ENCODE measurements at regions of chr3 and their contacts with region 1.

Region 1: DNA sequence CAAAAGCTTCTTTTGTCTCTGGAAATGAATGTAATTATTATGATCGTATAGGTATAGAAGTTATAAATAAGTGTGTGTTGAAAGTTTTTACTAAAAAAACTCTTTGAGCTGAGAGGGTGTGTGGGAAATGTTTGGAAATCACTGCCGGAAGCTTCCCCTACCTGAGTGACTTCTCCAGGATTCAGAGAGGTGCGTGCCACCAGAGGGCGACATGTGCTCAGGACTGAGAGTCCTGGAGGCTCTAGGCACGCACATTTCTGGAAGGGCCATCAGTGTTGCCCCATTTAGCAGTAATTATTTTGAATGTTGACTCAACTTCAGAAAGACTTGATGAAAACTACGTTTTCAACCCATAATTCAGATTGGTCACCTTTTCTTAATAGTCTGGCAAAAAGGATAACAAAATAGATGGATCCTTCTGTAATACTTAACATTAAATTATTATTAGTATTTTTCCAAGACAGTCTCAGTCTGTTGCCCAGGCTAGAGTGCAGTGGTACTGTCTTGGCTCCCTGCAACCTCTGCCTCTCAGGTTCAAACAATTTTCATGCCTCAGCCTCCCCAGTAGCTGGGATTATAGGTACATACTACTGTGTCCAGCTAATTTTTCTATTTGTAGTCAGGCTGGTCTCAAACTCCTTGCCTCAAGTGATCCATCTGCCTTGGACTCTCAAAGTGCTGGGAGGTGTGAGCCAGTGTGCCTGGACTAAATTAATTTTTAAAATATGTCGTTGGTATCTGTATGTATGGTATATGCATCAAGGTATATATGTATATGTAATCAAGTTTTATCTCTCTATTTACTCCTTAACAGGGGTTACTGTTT is 34.5 kb downstream of the GPR171 start:
- DNase-seq: peak; percentile 92
- ATAC-seq: peak; percentile 65
- H3K4me3 Mint-ChIP-seq: no peak overlapping the region
- H3K27ac Mint-ChIP-seq: peak overlapping the region; percentile 27
- H3K4me1 Mint-ChIP-seq: peaks cover 43% of the 10 kb centered on the region
- H3K27me3 Mint-ChIP-seq: no peaks in the 10 kb centered on the region
- CTCF ChIP-seq: peak; percentile 85

Region 2: DNA sequence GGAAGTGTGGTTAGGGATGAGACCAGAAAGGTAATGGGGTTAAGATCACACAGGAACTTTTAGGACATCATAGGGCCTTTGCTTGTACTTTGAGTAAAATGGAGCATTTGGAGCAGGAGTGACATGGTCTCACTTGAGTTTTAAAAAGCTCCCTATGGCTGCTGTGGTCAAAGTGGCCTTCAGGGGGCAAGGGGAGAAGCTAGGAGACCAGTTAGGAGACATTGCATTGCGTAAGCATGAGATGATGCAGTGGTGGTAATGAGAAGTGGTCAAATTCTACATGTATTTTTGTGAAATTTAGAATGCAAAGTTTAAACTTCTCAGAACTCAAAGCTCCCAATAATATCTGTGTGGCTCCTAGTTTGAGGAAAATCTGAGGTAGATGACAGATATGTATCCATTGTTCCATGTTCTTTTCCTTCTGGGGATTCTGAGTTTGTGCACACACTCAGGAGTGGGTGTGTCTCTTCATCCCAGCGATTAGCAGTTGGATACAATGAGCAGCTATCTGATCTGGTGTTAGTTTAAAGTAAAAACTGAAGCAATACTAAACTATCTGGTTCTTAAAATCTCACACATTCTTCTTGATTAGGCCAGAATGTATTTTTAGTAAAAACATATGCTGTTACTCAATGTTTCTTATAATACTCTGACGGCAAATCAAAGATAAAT is 55.0 kb before region 1 on chr3:
- CTCF ChIA-PET with region 1: no interaction called
- POLR2A ChIA-PET with region 1: no interaction called
- intact Hi-C with region 1: no loop called
- DNase-seq: no peak
- ATAC-seq: no peak
- H3K4me3 Mint-ChIP-seq: no peak overlapping the region
- H3K27ac Mint-ChIP-seq: no peak overlapping the region
- H3K4me1 Mint-ChIP-seq: no peaks in the 10 kb centered on the region
- H3K27me3 Mint-ChIP-seq: peaks cover 3% of the 10 kb centered on the region
- CTCF ChIP-seq: no peak

Region 3: GRCh38 chr3:151183265-151183671 is 14.8 kb after region 1 on chr3:
- CTCF ChIA-PET with region 1: interaction called, 13 read pairs
- POLR2A ChIA-PET with region 1: interaction called, 4 read pairs
- intact Hi-C with region 1: no loop called
- DNase-seq: no peak
- ATAC-seq: peak; percentile 63
- H3K4me3 Mint-ChIP-seq: peak overlapping the region; percentile 67
- H3K27ac Mint-ChIP-seq: peak overlapping the region; percentile 84
- H3K4me1 Mint-ChIP-seq: peaks cover 55% of the 10 kb centered on the region
- H3K27me3 Mint-ChIP-seq: no peaks in the 10 kb centered on the region
- CTCF ChIP-seq: no peak

Region 4: DNA sequence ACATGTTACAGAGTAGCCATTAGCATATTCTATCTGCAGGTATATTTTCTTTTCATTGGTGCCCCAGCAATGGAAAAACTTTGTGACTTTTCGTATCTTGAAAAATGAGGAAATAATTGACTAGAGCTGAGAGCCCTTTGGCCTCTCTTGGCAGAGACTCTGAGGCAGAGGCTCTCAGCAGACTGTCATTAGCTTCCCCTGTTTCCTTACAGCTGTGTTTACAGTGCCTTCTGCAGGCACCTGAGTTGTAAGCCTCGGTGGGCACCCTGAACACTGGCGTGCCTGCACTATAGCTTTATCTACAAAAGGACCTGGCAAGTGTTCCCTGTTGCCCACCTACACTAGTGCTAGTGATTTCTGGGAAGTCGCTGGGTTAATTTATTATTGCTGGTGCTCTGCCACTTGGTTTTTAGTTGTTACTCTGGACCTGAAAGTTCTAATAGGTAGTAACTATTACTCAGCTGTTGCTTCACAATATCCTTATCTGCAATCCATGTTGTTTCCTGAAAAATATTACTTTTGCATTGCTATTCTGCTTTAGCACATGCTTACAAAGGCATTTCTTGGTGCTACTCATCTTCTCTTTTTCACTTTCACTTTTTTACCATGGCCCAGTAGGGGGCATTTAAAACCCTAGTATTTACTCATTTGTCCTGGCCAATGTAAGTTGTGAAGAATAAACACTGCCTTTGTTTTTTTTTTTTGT is 42.3 kb after region 1 on chr3:
- CTCF ChIA-PET with region 1: interaction called, 33 read pairs
- POLR2A ChIA-PET with region 1: interaction called, 7 read pairs
- intact Hi-C with region 1: no loop called
- DNase-seq: no peak
- ATAC-seq: peak; percentile 50
- H3K4me3 Mint-ChIP-seq: peak overlapping the region; percentile 63
- H3K27ac Mint-ChIP-seq: peak overlapping the region; percentile 85
- H3K4me1 Mint-ChIP-seq: peaks cover 51% of the 10 kb centered on the region
- H3K27me3 Mint-ChIP-seq: no peaks in the 10 kb centered on the region
- CTCF ChIP-seq: peak; percentile 39

Region 5: GRCh38 chr3:151227807-151228665 is 59.6 kb after region 1 on chr3:
- CTCF ChIA-PET with region 1: interaction called, 143 read pairs
- POLR2A ChIA-PET with region 1: interaction called, 3 read pairs
- intact Hi-C with region 1: loop called (anchors 2 kb)
- DNase-seq: peak; percentile 89
- ATAC-seq: peak; percentile 64
- H3K4me3 Mint-ChIP-seq: peak overlapping the region; percentile 28
- H3K27ac Mint-ChIP-seq: peak overlapping the region; percentile 92
- H3K4me1 Mint-ChIP-seq: peaks cover 64% of the 10 kb centered on the region
- H3K27me3 Mint-ChIP-seq: no peaks in the 10 kb centered on the region
- CTCF ChIP-seq: peak; percentile 92

Region 6: GRCh38 chr3:151268267-151269235 is 100.1 kb after region 1 on chr3:
- CTCF ChIA-PET with region 1: interaction called, 20 read pairs
- POLR2A ChIA-PET with region 1: no interaction called
- intact Hi-C with region 1: no loop called
- DNase-seq: peak; percentile 83
- ATAC-seq: peak; percentile 89
- H3K4me3 Mint-ChIP-seq: peak overlapping the region; percentile 54
- H3K27ac Mint-ChIP-seq: peak overlapping the region; percentile 85
- H3K4me1 Mint-ChIP-seq: peaks cover 27% of the 10 kb centered on the region
- H3K27me3 Mint-ChIP-seq: no peaks in the 10 kb centered on the region
- CTCF ChIP-seq: no peak

Region 7: GRCh38 chr3:151327571-151328198 is 159.2 kb after region 1 on chr3:
- CTCF ChIA-PET with region 1: interaction called, 13 read pairs
- POLR2A ChIA-PET with region 1: no interaction called
- intact Hi-C with region 1: no loop called
- DNase-seq: no peak
- ATAC-seq: no peak
- H3K4me3 Mint-ChIP-seq: no peak overlapping the region
- H3K27ac Mint-ChIP-seq: no peak overlapping the region
- H3K4me1 Mint-ChIP-seq: peaks cover 6% of the 10 kb centered on the region
- H3K27me3 Mint-ChIP-seq: peaks cover 6% of the 10 kb centered on the region
- CTCF ChIP-seq: peak; percentile 49